ENCODE measurements at regions of chr10 and their contacts with region 1.

Region 1: GRCh38 chr10:70233109-70233938 is at the start of gene PPA1:
- DNase-seq: peak; percentile 96 to 99
- H3K4me3 ChIP-seq: peak within 1 kb of the TSS; percentile 85
- CTCF ChIP-seq: no peak
- POLR2A ChIP-seq: peak in 1 of 2 donors; percentile 1
- total RNA-seq, gene PPA1: 69.7 to 147 (median 96.9) TPM

Region 2: DNA sequence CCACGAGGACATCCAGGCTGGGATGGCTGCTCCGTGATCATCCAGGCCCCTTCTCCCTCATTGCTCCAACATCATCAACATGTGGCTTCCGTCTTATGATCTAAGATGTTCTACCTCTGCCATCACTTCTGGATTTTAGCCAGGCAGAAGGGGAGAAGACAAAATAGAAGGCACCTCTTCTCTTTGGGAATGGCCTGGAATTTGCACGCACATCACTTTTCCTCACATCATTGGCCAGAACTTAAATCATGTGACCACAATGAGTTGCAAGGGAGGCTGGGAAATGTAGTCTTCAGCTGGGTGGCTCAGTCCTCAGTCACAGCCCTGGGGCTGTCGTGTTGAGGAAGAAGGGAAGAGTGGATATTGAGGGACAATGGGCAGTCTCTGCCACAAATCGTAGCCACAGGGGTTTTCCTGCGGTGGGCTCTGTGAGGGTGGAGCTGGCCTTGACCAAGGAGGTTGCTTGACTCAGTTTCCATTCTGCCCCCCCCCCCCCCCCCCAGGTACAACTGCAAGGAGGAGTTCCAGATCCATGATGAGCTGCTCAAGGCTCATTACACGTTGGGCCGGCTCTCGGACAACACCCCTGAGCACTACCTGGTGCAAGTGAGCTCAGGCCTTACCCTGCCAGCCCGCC is 295.5 kb after region 1 on chr10:
- intact Hi-C with region 1: no loop called
- DNase-seq: no peak
- H3K4me3 ChIP-seq: no peak overlapping the region
- CTCF ChIP-seq: no peak
- POLR2A ChIP-seq: no peak

Region 3: GRCh38 chr10:70744617-70745143 is 511.4 kb after region 1 on chr10:
- intact Hi-C with region 1: loop called (anchors 5 kb)
- DNase-seq: no peak
- H3K4me3 ChIP-seq: no peak overlapping the region
- CTCF ChIP-seq: no peak
- POLR2A ChIP-seq: no peak

Measured in lower leg skin (tissue), 4 donors.